Activated CD4-positive, alpha-beta T cell treated with anti-CD3 and anti-CD28 coated beads, Interleukin-2, amount 10 ng/mL, durations not matched to agents 24 days and 14 days (primary cell): ENCODE measurements at regions of chr5 and their contacts with region 1.

Region 1: DNA sequence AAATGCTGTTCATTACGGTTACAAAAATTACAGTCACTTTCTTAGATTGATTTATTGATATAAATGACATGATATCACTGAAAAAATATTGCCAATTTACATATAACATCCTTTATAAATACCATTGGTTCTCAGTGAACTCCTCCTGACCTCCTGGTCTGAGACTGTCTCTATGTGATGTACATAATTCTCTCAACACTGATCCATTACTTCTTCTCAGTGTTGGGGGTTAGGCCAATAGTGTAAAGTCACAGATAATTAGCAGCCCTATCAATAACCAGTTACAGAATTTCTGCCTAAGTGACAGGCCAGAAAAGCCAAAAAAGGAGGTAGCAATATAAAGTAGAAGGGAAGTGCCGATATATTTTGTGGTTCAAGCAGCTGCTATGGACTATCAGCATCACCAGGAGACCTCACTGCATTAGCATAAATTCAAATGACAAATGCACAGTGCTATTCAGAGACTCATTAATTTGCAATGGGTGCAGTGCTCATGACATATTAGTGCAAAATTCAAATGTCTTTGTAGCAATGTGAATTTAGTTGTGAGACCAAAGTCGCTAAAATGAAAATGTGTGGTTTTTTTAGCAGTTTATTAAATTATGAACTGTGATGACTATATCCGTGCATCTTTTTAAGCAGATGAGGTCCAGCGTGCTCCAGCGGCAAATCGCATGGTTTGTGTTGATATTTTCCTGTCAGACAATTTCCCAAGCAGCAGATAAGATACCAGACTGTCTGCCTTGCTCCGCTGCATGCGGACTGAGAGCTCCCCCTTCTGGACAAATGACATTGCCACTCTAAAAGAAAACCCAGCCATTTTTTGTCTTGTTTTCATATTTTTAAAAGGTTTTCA is 144.6 kb downstream of the CETN3 start:
- DNase-seq: peak; percentile 85
- H3K4me3 Mint-ChIP-seq: no peak overlapping the region
- H3K27ac Mint-ChIP-seq: no peak overlapping the region
- H3K4me1 Mint-ChIP-seq: no peaks in the 10 kb centered on the region
- H3K27me3 Mint-ChIP-seq: peaks cover 3% of the 10 kb centered on the region

Region 2: GRCh38 chr5:88729084-88729828 is 1535.7 kb before region 1 on chr5:
- intact Hi-C with region 1: loop called (anchors 1 kb)
- DNase-seq: peak; percentile 85
- H3K4me3 Mint-ChIP-seq: no peak overlapping the region
- H3K27ac Mint-ChIP-seq: no peak overlapping the region
- H3K4me1 Mint-ChIP-seq: peaks cover 2% of the 10 kb centered on the region
- H3K27me3 Mint-ChIP-seq: peaks cover 10% of the 10 kb centered on the region

Region 3: DNA sequence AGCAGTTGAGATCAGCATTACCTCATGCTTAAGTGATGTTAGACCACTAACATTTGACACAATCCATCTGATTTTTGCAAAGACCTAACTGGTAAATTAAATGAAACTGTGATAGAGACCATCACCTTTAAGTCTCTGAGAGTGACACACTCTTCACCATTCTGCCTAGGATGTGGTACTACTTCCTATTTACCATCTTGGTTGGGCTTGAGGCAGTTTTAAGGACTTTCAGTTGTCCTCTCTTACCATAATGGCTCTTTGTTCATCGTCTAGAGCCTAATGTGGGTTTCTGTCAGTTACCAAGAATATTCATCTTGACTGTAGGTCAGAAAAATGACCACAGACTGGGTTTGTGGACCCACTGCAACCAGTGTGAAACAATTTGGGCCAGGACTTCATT is 13.5 kb before region 1 on chr5:
- intact Hi-C with region 1: no loop called
- DNase-seq: no peak
- H3K4me3 Mint-ChIP-seq: no peak overlapping the region
- H3K27ac Mint-ChIP-seq: no peak overlapping the region
- H3K4me1 Mint-ChIP-seq: no peaks in the 10 kb centered on the region
- H3K27me3 Mint-ChIP-seq: peaks cover 2% of the 10 kb centered on the region

Region 4: GRCh38 chr5:90279091-90279490 is 14.2 kb after region 1 on chr5:
- intact Hi-C with region 1: no loop called
- DNase-seq: no peak
- H3K4me3 Mint-ChIP-seq: no peak overlapping the region
- H3K27ac Mint-ChIP-seq: no peak overlapping the region
- H3K4me1 Mint-ChIP-seq: no peaks in the 10 kb centered on the region
- H3K27me3 Mint-ChIP-seq: no peaks in the 10 kb centered on the region